ENCODE measurements at regions of chr1 and their contacts with region 1.

Region 1: GRCh38 chr1:48677306-48678287 is 99.1 kb downstream of the BEND5 start:
- DNase-seq: no peak
- H3K4me3 ChIP-seq: no peak overlapping the region
- H3K27ac ChIP-seq: no peak overlapping the region
- H3K27me3 ChIP-seq: no peaks in the 10 kb centered on the region
- CTCF ChIP-seq: peak; percentile 62

Region 2: DNA sequence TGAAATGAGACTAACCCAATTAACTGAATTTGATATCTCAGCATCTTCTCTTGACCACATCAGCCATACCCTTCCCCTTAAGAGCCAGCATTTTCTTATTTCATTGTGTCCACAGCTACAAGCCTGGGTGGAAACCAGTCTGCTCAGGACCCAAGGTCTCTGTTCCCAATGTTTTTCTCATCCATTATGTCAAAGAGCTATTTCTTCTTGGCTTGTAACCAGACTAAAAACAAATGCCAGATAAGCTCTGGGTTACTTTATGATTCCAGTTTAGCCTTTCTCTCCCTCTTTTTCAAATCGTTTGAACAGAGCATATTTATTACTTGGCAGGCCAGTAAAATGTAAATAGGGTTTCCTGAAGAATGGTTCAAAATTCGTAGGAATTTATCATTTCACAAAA is 96.3 kb before region 1 on chr1:
- CTCF ChIA-PET with region 1: no interaction called
- POLR2A ChIA-PET with region 1: no interaction called
- DNase-seq: no peak
- H3K4me3 ChIP-seq: no peak overlapping the region
- H3K27ac ChIP-seq: no peak overlapping the region
- H3K27me3 ChIP-seq: no peaks in the 10 kb centered on the region
- CTCF ChIP-seq: no peak

Region 3: DNA sequence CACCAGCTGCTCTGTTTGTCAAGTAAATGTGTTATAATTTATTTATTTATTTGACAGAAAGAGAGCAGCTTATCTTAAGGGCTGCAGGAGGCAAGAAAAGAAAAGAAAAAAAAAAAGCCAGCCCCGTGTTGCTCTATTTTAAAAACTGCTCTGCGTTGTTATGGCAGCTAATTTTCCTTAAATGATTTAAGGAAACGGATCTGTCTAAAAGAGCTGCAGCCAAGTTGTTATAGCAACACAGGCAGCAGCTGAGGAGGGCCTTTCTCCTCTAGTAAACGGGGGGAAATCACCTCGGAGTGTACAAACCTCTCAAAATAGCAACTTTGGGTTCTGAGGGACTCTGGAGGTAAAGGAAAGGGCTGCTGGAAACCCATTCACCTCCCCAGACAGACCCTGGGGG is 50.1 kb before region 1 on chr1:
- CTCF ChIA-PET with region 1: no interaction called
- POLR2A ChIA-PET with region 1: no interaction called
- DNase-seq: no peak
- H3K4me3 ChIP-seq: no peak overlapping the region
- H3K27ac ChIP-seq: no peak overlapping the region
- H3K27me3 ChIP-seq: no peaks in the 10 kb centered on the region
- CTCF ChIP-seq: no peak

Region 4: GRCh38 chr1:48665708-48666407 is 11.7 kb before region 1 on chr1:
- CTCF ChIA-PET with region 1: interaction called, 15 read pairs
- POLR2A ChIA-PET with region 1: no interaction called
- DNase-seq: no peak
- H3K4me3 ChIP-seq: no peak overlapping the region
- H3K27ac ChIP-seq: no peak overlapping the region
- H3K27me3 ChIP-seq: peaks cover 2% of the 10 kb centered on the region
- CTCF ChIP-seq: no peak

Region 5: DNA sequence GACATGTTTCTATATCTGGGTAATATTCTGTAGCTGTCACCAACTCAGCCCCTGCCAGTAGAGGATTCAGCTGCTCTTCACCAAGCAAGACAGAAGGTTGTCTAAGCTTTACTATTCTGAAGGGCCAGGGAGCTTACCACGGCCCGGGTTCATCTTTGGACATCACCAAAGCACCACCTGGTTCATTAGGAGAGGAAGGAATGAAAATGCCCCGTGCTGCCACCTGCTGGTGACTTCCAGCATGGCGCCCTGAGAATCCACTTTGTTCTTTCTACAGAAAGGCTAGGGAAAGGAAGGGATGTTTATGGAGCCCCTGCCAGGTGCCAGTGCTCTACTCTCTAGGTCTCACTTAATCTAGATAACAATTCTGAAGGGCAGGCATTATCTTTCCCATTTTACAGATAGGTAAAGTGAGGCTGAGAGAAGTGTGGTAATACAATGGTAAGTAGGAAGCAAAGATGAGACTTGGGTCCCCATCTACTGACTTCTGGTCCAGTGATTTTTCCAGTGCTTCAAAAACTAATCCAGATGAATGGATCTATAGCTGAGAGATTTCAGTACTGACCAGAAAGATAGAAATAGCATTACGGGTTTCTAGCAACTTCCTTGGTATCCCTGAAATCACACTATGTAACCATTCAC is 19.6 kb after region 1 on chr1:
- CTCF ChIA-PET with region 1: interaction called, 32 read pairs
- POLR2A ChIA-PET with region 1: no interaction called
- DNase-seq: no peak
- H3K4me3 ChIP-seq: no peak overlapping the region
- H3K27ac ChIP-seq: no peak overlapping the region
- H3K27me3 ChIP-seq: no peaks in the 10 kb centered on the region
- CTCF ChIP-seq: peak; percentile 93

Region 6: GRCh38 chr1:48776393-48777218 is 99.0 kb after region 1 on chr1 and contains the start of gene BEND5:
- CTCF ChIA-PET with region 1: no interaction called
- POLR2A ChIA-PET with region 1: no interaction called
- DNase-seq: peak; percentile 6
- H3K4me3 ChIP-seq: peak within 1 kb of the TSS; percentile 59
- H3K27ac ChIP-seq: no peak within 1 kb of the TSS
- H3K27me3 ChIP-seq: peaks cover 6% of the 10 kb centered on the region
- CTCF ChIP-seq: no peak
- polyA plus RNA-seq, gene BEND5: 0.74 and 1.2 TPM in 2 replicates

Region 7: DNA sequence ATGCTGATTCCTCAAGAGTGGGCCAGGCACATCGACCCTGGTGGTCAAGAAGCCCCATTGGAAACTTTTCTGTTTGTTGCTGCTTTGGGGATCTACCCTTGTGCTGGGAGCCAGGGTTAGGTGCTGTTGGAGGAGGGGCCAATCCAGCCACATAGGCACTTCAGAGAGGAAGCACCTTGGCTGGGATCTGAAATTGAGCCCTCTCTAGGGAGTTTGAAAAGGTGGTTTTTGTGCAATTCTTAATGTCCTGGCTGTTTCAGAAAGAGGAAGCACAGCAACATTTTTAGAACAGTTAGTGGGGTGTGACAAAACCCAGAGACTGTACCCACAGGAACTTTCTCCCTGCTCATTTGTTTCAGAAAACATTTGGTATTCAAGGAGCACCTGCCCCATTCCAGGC is 116.3 kb after region 1 on chr1:
- CTCF ChIA-PET with region 1: no interaction called
- POLR2A ChIA-PET with region 1: no interaction called
- DNase-seq: no peak
- H3K4me3 ChIP-seq: no peak overlapping the region
- H3K27ac ChIP-seq: no peak overlapping the region
- H3K27me3 ChIP-seq: no peaks in the 10 kb centered on the region
- CTCF ChIP-seq: no peak

Region 8: GRCh38 chr1:48817505-48818114 is 140.0 kb after region 1 on chr1:
- CTCF ChIA-PET with region 1: interaction called, 51 read pairs
- POLR2A ChIA-PET with region 1: no interaction called
- DNase-seq: peak; percentile 11
- H3K4me3 ChIP-seq: no peak overlapping the region
- H3K27ac ChIP-seq: no peak overlapping the region
- H3K27me3 ChIP-seq: no peaks in the 10 kb centered on the region
- CTCF ChIP-seq: peak; percentile 83

Region 9: GRCh38 chr1:50348449-50349241 is 1671.0 kb after region 1 on chr1:
- CTCF ChIA-PET with region 1: interaction called, 19 read pairs
- POLR2A ChIA-PET with region 1: no interaction called
- DNase-seq: peak; percentile 46
- H3K4me3 ChIP-seq: no peak overlapping the region
- H3K27ac ChIP-seq: no peak overlapping the region
- H3K27me3 ChIP-seq: peaks cover 2% of the 10 kb centered on the region
- CTCF ChIP-seq: peak; percentile 86

Measured in AG04450 (cell line).